ENCODE measurements at regions of chr19 and their contacts with region 1.

Region 1: GRCh38 chr19:17947815-17948513 is 15.1 kb downstream of the CCDC124 start:
- DNase-seq: peak; percentile 94 to 97 (median 97)
- ATAC-seq: peak; percentile 89
- H3K4me3 ChIP-seq: peak overlapping the region; percentile 98
- H3K27ac ChIP-seq: no peak overlapping the region
- H3K4me1 ChIP-seq: no peaks in the 10 kb centered on the region
- H3K27me3 ChIP-seq: no peaks in the 10 kb centered on the region

Region 2: DNA sequence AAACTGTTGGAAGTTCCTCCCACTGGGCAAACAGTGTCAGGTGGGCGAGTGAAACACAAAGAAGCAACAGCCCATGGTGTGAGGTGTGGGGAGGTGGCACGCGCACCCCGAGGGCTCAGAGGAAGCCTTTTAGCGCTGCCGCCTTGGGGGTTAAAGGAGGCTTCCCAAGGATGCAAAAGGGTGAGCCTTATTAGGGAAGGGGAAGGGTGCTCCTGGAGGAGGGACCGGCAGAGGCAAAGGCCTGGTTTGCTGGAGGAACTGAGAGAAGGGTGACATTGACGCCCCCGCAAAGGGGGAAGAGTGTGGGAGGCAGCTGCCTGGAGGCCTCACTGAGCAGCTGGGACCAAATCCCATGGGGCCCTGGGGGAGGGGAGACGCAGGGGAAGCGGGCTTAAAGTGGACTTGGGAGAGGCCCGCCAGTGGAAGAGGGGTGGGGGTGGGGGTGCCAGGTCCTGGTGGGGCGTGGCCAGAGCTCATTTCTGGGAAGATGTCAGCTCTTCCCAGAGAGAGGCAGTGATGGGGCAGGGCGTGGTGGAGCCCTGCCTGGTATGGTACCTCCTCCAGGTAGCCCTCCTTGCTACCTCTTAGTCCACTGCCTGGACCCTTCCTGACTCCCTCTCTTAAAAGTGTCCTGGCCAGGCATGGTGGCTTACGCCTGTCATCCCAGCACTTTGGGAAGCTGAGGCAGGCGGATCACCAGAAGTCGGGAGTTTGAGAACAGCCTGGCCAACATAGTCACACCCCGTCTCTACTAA is 208.7 kb before region 1 on chr19:
- intact Hi-C with region 1: no loop called
- DNase-seq: peak in 2 of 3 donors; percentile 57 to 64
- ATAC-seq: peak in 1 of 2 donors; percentile 44
- H3K4me3 ChIP-seq: no peak overlapping the region
- H3K27ac ChIP-seq: no peak overlapping the region
- H3K4me1 ChIP-seq: no peaks in the 10 kb centered on the region
- H3K27me3 ChIP-seq: no peaks in the 10 kb centered on the region

Region 3: GRCh38 chr19:17985037-17985818 is 37.3 kb after region 1 on chr19:
- intact Hi-C with region 1: loop called in 1 of 4 experiments (anchors 5 kb)
- DNase-seq: no peak
- ATAC-seq: peak in 1 of 2 donors; percentile 22
- H3K4me3 ChIP-seq: no peak overlapping the region
- H3K27ac ChIP-seq: no peak overlapping the region
- H3K4me1 ChIP-seq: no peaks in the 10 kb centered on the region
- H3K27me3 ChIP-seq: no peaks in the 10 kb centered on the region

Region 4: GRCh38 chr19:17996826-17997316 is 48.9 kb after region 1 on chr19:
- intact Hi-C with region 1: loop called in 1 of 4 experiments (anchors 5 kb)
- DNase-seq: peak; percentile 86 to 95 (median 94)
- ATAC-seq: peak; percentile 74 to 76
- H3K4me3 ChIP-seq: no peak overlapping the region
- H3K27ac ChIP-seq: no peak overlapping the region
- H3K4me1 ChIP-seq: no peaks in the 10 kb centered on the region
- H3K27me3 ChIP-seq: no peaks in the 10 kb centered on the region

Region 5: DNA sequence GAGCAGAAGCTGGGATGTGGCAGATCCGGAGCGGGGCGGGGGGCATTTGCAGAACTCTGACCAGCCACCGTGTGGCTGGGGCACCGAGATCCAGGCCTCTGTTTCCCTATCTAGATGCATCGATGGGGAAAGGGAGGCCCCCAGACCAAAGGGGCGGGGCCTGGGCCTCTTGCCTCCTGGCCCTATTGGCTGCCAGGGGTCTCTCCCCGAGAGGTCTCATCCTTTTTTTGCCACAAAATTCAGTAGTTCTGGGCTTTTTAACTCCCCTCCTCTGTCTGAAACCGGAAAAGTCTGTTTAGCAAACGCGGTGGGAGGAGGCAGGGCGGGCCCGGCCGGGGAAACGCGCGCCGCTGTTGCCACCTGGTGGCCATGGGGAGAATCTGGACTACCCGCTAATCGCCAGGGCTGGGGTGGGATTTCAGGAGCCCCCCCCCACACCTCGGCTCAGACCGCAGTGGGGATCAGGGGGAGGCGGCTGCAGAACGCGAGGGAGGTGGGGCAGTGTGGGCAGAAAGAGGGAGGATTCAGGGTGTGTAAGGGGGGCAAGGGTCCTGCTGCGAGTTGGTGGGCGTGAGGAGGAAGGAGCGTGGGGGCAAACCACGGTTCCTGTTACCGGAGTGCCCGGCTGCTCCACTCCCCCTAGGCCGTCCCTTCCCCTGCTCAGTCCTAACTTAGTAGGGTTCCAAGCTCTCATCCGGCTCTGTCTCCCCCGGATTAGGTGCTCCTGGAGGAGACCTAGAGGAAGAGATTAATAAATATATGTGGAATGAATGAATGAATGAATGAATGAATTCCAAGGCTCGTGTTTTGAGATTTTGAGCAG is 110.5 kb after region 1 on chr19:
- intact Hi-C with region 1: loop called in 3 of 4 experiments (anchors 5 to 10 kb)
- DNase-seq: peak; percentile 81 to 93 (median 93)
- ATAC-seq: peak; percentile 87 to 89
- H3K4me3 ChIP-seq: no peak overlapping the region
- H3K27ac ChIP-seq: peak overlapping the region; percentile 59
- H3K4me1 ChIP-seq: peaks cover 3% of the 10 kb centered on the region
- H3K27me3 ChIP-seq: no peaks in the 10 kb centered on the region

Region 6: DNA sequence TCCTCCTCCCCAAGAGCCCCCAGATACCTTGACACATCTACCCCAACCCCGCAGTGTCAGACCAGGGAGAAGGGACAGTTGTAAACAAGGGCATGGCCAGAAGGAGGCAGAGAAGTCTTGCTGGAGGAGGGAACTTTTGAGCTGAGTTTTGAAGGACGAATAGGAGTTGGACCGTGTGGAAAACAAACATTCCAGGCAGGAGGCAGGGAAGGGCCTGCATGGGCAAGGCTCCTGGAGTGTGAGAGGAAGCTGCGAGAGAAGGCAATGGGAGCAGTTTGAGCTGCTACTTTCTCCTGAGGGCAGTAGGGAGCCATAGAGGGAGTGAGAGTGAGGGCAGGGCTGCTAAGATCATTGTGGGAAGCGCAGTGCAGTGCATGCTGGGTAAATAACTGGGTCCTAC is 115.5 kb after region 1 on chr19:
- intact Hi-C with region 1: loop called in 3 of 4 experiments (anchors 5 to 10 kb)
- DNase-seq: peak in 1 of 3 donors; percentile 28
- ATAC-seq: no peak
- H3K4me3 ChIP-seq: no peak overlapping the region
- H3K27ac ChIP-seq: no peak overlapping the region
- H3K4me1 ChIP-seq: no peaks in the 10 kb centered on the region
- H3K27me3 ChIP-seq: no peaks in the 10 kb centered on the region

Region 7: DNA sequence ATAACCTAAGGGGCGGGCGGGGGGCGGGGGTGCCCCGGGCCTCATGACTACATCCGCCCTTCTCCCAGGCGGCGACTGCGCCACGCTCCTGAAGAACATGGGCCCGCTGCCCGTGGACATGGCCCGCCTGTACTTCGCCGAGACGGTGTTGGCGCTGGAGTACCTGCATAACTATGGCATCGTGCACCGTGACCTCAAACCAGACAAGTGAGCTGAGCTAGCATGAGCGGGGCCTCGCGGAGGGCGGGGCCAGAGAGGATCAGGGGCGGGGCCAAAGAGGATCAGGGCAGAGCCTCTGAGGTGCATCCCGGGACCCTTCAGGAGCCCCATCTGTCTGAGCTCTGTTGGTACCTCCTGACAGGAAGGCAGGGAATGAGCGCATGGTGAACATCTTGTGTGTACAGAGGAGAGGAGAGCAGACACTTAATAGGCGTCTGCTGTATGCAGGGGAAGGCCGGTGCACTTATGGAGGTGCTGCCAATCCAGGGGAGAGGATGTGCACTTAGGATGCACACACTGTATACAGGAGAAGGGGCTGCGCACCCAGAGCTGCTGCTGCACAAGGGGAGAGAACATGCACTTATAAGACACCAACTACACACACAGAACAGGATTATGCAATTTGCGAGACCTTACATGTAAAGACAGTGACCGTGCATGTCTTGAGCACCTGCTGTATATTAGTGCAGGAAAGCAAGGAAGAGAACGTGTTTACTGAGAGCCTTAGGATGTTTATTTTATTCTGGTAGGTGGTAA is 184.1 kb after region 1 on chr19:
- intact Hi-C with region 1: no loop called
- DNase-seq: no peak
- ATAC-seq: no peak
- H3K4me3 ChIP-seq: no peak overlapping the region
- H3K27ac ChIP-seq: no peak overlapping the region
- H3K4me1 ChIP-seq: no peaks in the 10 kb centered on the region
- H3K27me3 ChIP-seq: no peaks in the 10 kb centered on the region